Kidney (tissue), 22 donors: ENCODE measurements at regions of chr16 and their contacts with region 1.

Region 1: GRCh38 chr16:52629296-52629695 is 82.4 kb upstream of the TOX3 start:
- DNase-seq: no peak
- H3K4me3 ChIP-seq: no peak overlapping the region
- H3K27ac ChIP-seq: no peak overlapping the region
- H3K4me1 ChIP-seq: no peaks in the 10 kb centered on the region
- H3K27me3 ChIP-seq: no peaks in the 10 kb centered on the region
- CTCF ChIP-seq: no peak

Region 2: GRCh38 chr16:52578007-52578828 is 51.1 kb before region 1 on chr16:
- intact Hi-C with region 1: loop called (anchors 5 kb)
- DNase-seq: no peak
- H3K4me3 ChIP-seq: no peak overlapping the region
- H3K27ac ChIP-seq: no peak overlapping the region
- H3K4me1 ChIP-seq: peaks cover 0 to 6% (median 0%) of the 10 kb centered on the region in 3 donors
- H3K27me3 ChIP-seq: no peaks in the 10 kb centered on the region
- CTCF ChIP-seq: no peak

Region 3: DNA sequence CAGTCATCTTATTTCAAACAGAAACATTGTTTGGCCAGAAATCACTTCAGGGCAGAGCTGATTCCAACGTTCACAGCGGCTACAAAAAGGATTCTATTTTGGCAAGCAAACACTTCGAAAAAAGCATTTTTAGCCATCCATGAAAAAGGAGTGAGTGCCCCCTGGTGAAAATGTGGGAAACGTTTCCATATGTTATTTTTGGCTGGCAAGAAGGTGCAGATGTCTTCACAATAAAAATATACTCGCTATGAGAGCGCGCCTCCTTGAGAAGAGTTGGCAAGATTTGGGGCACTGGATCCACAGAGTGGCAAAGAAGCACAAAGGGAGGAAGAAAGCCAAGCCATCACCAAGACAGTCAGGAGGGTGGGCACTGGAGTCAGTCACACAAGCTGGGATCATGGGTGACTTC is 232.3 kb after region 1 on chr16:
- intact Hi-C with region 1: no loop called
- DNase-seq: peak in 4 of 5 donors; percentile 45 to 77 (median 58)
- H3K4me3 ChIP-seq: no peak overlapping the region
- H3K27ac ChIP-seq: no peak overlapping the region
- H3K4me1 ChIP-seq: no peaks in the 10 kb centered on the region
- H3K27me3 ChIP-seq: no peaks in the 10 kb centered on the region
- CTCF ChIP-seq: peak; percentile 33